ENCODE measurements at regions of chr3 and their contacts with region 1.

Region 1: GRCh38 chr3:52220380-52221026 is 4.9 kb downstream of the TLR9 start:
- DNase-seq: peak in 1 of 2 experiments; percentile 96
- H3K4me3 ChIP-seq: no peak overlapping the region
- H3K27ac ChIP-seq: no peak overlapping the region
- H3K4me1 ChIP-seq: peaks cover 0 to 3% (median under 1%) of the 10 kb centered on the region in 4 experiments; a peak in 3 of 7 replicates
- H3K27me3 ChIP-seq: no peaks in the 10 kb centered on the region
- CTCF ChIP-seq: peak in 2 of 3 experiments; percentile 87 to 99; a peak in 3 of 4 replicates
- EP300 ChIP-seq: no peak
- POLR2A ChIP-seq: no peak
- RAD21 ChIP-seq: peak; percentile 78 to 81

Region 2: DNA sequence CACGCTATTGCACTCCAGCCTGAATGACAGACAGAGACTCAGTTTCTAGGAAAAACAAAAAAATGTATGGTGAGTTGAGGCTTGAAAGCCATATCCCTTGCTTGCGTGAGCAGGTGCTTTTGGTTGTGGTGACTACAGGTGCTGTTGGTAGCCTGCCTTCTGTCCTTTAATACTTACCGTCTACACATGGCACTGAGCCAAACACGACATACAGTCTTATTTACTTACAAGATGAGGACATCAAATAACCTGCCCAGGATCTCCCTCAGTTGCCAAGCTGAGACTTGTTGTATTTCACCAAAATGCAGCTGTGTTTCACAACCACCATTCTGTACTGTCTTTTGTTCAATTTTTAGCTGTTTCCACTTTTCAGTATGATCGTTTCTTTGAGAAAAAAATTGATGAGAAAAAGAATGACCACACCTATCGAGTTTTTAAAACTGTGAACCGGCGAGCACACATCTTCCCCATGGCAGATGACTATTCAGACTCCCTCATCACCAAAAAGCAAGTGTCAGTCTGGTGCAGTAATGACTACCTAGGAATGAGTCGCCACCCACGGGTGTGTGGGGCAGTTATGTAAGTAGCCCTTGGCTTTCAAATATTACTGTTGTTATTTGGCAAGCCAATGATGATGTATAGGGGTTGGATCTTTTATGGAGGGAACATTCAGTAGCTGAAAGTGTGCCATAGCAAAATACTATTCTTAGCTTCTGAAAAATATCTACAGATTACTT is 16.0 kb before region 1 on chr3:
- CTCF ChIA-PET with region 1: interaction called, 52 read pairs
- POLR2A ChIA-PET with region 1: interaction called, 3 read pairs
- DNase-seq: no peak
- H3K4me3 ChIP-seq: no peak overlapping the region
- H3K27ac ChIP-seq: no peak overlapping the region
- H3K4me1 ChIP-seq: no peaks in the 10 kb centered on the region
- H3K27me3 ChIP-seq: no peaks in the 10 kb centered on the region
- CTCF ChIP-seq: no peak
- EP300 ChIP-seq: no peak
- POLR2A ChIP-seq: no peak
- RAD21 ChIP-seq: no peak

Region 3: GRCh38 chr3:52238761-52239701 is 18.5 kb after region 1 on chr3 and contains the start of gene TWF2:
- CTCF ChIA-PET with region 1: interaction called, 336 read pairs
- POLR2A ChIA-PET with region 1: interaction called, 7 read pairs
- DNase-seq: peak in 1 of 2 experiments; percentile 87
- H3K4me3 ChIP-seq: peak within 1 kb of the TSS; percentile 72 to 95 (median 91)
- H3K27ac ChIP-seq: peak within 1 kb of the TSS; percentile 61; the same call in 1 of the 2 replicates
- H3K4me1 ChIP-seq: peaks cover 15 to 42% (median 28%) of the 10 kb centered on the region in 4 experiments
- H3K27me3 ChIP-seq: peaks cover 0 to 6% (median 3%) of the 10 kb centered on the region in 4 experiments; a peak in 3 of 7 replicates
- CTCF ChIP-seq: peak in 2 of 3 experiments; percentile 38 to 40; a peak in 2 of 4 replicates
- EP300 ChIP-seq: no peak
- POLR2A ChIP-seq: peak in 1 of 2 experiments; percentile 75; a peak in 2 of 3 replicates
- RAD21 ChIP-seq: peak in 1 of 2 experiments; percentile 14; a peak in 1 of 4 replicates
- total RNA-seq, gene TWF2: 62.6 and 65.2 TPM in 2 replicates

Region 4: GRCh38 chr3:52245322-52246263 is 25.1 kb after region 1 on chr3 and contains the start of gene PPM1M:
- CTCF ChIA-PET with region 1: interaction called, 336 read pairs
- POLR2A ChIA-PET with region 1: interaction called, 5 read pairs
- DNase-seq: peak in 1 of 2 experiments; percentile 83
- H3K4me3 ChIP-seq: peak within 1 kb of the TSS; percentile 32 to 58 (median 51)
- H3K27ac ChIP-seq: no peak within 1 kb of the TSS
- H3K4me1 ChIP-seq: peaks cover 5 to 18% (median 14%) of the 10 kb centered on the region in 4 experiments
- H3K27me3 ChIP-seq: peaks cover 6 to 37% (median 23%) of the 10 kb centered on the region in 4 experiments; a peak in 6 of 7 replicates
- CTCF ChIP-seq: no peak
- EP300 ChIP-seq: no peak
- POLR2A ChIP-seq: no peak
- RAD21 ChIP-seq: no peak
- total RNA-seq, gene PPM1M: 5.2 and 5.4 TPM in 2 replicates

Region 5: GRCh38 chr3:52366527-52366926 is 146.0 kb after region 1 on chr3:
- CTCF ChIA-PET with region 1: interaction called, 25 read pairs
- POLR2A ChIA-PET with region 1: no interaction called
- DNase-seq: no peak
- H3K4me3 ChIP-seq: no peak overlapping the region
- H3K27ac ChIP-seq: no peak overlapping the region
- H3K4me1 ChIP-seq: peaks cover 0 to 11% (median 0%) of the 10 kb centered on the region in 4 experiments; a peak in 3 of 7 replicates
- H3K27me3 ChIP-seq: peaks cover 0 to 1% (median 0%) of the 10 kb centered on the region in 4 experiments; a peak in 2 of 7 replicates
- CTCF ChIP-seq: no peak
- EP300 ChIP-seq: no peak
- POLR2A ChIP-seq: no peak
- RAD21 ChIP-seq: no peak

Region 6: GRCh38 chr3:52372822-52373504 is 152.5 kb after region 1 on chr3:
- CTCF ChIA-PET with region 1: interaction called, 25 read pairs
- POLR2A ChIA-PET with region 1: no interaction called
- DNase-seq: peak in 1 of 2 experiments; percentile 81
- H3K4me3 ChIP-seq: peak overlapping the region in 2 of 4 experiments; percentile 16 to 56; a peak in 5 of 8 replicates
- H3K27ac ChIP-seq: no peak overlapping the region
- H3K4me1 ChIP-seq: peaks cover 0 to 15% (median 5%) of the 10 kb centered on the region in 4 experiments; a peak in 4 of 7 replicates
- H3K27me3 ChIP-seq: peaks cover 0 to 1% (median 0%) of the 10 kb centered on the region in 4 experiments; a peak in 3 of 7 replicates
- CTCF ChIP-seq: peak in 1 of 3 experiments; percentile 35; a peak in 1 of 4 replicates
- EP300 ChIP-seq: no peak
- POLR2A ChIP-seq: no peak
- RAD21 ChIP-seq: no peak

Region 7: DNA sequence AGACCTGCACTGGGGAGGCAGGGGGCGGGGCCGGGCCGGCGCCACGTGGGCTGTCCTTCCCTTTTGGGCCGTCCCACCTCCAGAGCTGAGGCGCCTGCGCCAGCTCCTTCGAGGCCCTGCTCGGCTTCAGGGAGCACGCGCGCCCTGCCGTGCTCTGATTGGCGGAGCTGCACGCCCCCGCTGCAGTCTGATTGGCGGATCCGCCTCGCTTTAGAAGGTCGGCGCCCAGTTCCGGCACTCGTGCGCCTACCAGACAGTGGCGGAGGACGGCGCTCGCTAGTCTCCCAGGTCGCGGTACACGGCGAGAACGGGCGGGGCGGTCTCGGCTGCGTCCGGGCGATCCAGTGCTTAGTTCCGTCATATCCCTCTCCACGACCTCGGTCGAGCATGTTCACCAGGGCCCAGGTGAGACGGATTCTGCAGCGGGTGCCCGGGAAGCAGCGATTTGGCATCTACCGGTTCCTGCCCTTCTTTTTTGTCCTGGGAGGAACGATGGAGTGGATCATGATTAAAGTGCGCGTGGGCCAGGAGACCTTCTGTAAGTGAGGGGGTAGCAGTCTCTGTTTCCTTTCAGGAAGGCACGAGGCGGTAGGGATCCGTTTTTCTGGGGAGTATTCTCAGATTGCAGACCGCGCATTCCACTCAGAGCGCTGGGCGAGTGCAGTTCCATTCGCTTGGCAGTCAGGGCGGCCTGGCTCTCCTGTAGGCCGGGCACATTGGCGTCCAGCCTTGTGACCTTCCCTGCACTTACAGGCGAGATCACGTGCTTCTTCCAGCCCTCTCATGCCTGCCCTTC is 316.1 kb after region 1 on chr3 and contains the start of gene UQCC5:
- CTCF ChIA-PET with region 1: no interaction called
- POLR2A ChIA-PET with region 1: no interaction called
- DNase-seq: peak; percentile 94 to 96
- H3K4me3 ChIP-seq: peak within 1 kb of the TSS; percentile 81 to 91 (median 88)
- H3K27ac ChIP-seq: peak within 1 kb of the TSS; percentile 77
- H3K4me1 ChIP-seq: peaks cover 7 to 33% (median 19%) of the 10 kb centered on the region in 4 experiments
- H3K27me3 ChIP-seq: no peaks in the 10 kb centered on the region
- CTCF ChIP-seq: no peak
- EP300 ChIP-seq: no peak
- POLR2A ChIP-seq: peak in 1 of 2 experiments; percentile 97; a peak in 2 of 3 replicates
- RAD21 ChIP-seq: peak in 1 of 2 experiments; percentile 11; a peak in 1 of 4 replicates
- total RNA-seq, gene UQCC5: 37.7 and 39.3 TPM in 2 replicates

Region 8: GRCh38 chr3:52574056-52574965 is 353.8 kb after region 1 on chr3:
- CTCF ChIA-PET with region 1: no interaction called
- POLR2A ChIA-PET with region 1: no interaction called
- DNase-seq: no peak
- H3K4me3 ChIP-seq: no peak overlapping the region
- H3K27ac ChIP-seq: no peak overlapping the region
- H3K4me1 ChIP-seq: no peaks in the 10 kb centered on the region
- H3K27me3 ChIP-seq: no peaks in the 10 kb centered on the region
- CTCF ChIP-seq: no peak
- EP300 ChIP-seq: no peak
- POLR2A ChIP-seq: no peak
- RAD21 ChIP-seq: no peak

Measured in H1 (cell line).